Cardiac septum (tissue), 1 donor: ENCODE measurements at regions of chr5 and their contacts with region 1.

Region 1: DNA sequence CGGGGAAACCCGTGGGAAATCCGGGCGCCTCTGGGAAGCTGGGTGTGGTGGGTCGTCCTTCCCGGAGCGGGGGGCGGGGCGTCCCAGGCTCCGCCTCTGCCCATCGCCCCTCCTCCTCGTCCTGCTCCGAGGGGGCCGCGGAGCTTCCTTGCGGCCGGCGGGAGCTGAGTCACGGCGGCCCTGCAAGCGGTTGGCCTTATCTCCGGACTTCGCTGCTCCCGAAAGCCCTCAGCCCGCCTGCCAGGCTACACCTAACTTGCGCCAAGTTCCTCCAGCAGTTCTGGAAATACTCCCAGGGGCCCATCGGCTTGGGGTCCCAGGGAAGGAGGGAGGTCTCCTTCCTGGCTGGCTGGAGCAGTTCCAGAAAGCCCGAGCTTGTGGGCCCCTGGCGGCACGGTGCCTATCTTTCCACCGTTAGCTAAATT is 54.1 kb upstream of the CDKN2AIPNL start:
- DNase-seq: peak; percentile 95

Region 2: GRCh38 chr5:134370871-134371833 is 94.7 kb before region 1 on chr5 and contains the start of gene UBE2B:
- intact Hi-C with region 1: loop called (anchors 1 kb)
- DNase-seq: peak; percentile 99
- total RNA-seq, gene UBE2B: 180 TPM

Region 3: GRCh38 chr5:134436523-134437339 is 29.1 kb before region 1 on chr5:
- intact Hi-C with region 1: loop called (anchors 2 kb)
- DNase-seq: peak; percentile 80

Region 4: GRCh38 chr5:134506054-134507039 is 40.5 kb after region 1 on chr5:
- intact Hi-C with region 1: loop called (anchors 1 kb)
- DNase-seq: peak; percentile 90

Region 5: GRCh38 chr5:134527146-134527960 is 61.5 kb after region 1 on chr5:
- intact Hi-C with region 1: loop called (anchors 1 kb)
- DNase-seq: peak; percentile 93

Region 6: GRCh38 chr5:134577796-134578363 is 112.1 kb after region 1 on chr5:
- intact Hi-C with region 1: loop called (anchors 5 kb)
- DNase-seq: peak; percentile 86